HEK293 (cell line): ENCODE measurements at regions of chr22 and their contacts with region 1.

Region 1: DNA sequence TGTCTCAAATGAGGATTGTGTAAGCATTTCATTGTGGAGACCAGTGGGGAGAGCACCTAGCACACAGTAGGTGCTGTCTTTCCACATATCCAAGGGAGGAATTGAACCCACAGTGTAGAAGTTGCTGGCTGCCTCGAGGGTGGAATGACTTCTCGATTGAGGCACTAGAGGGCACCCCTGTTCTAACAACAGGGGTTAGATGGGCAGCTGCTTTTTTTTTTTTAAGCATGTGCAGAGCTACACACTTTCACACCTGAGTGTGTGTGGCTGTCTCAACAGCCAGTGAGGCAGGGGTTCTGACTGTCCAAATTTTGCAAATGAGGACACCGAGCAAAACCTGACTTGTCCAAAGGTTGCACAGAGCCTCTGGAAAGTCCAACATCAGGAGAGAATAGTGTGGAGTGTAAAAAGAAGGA is 118.2 kb upstream of the CRYBB3 start:
- H3K4me3 ChIP-seq: no peak overlapping the region
- H3K27ac ChIP-seq: no peak overlapping the region
- H3K4me1 ChIP-seq: no peaks in the 10 kb centered on the region
- CTCF ChIP-seq: peak; percentile 66

Region 2: DNA sequence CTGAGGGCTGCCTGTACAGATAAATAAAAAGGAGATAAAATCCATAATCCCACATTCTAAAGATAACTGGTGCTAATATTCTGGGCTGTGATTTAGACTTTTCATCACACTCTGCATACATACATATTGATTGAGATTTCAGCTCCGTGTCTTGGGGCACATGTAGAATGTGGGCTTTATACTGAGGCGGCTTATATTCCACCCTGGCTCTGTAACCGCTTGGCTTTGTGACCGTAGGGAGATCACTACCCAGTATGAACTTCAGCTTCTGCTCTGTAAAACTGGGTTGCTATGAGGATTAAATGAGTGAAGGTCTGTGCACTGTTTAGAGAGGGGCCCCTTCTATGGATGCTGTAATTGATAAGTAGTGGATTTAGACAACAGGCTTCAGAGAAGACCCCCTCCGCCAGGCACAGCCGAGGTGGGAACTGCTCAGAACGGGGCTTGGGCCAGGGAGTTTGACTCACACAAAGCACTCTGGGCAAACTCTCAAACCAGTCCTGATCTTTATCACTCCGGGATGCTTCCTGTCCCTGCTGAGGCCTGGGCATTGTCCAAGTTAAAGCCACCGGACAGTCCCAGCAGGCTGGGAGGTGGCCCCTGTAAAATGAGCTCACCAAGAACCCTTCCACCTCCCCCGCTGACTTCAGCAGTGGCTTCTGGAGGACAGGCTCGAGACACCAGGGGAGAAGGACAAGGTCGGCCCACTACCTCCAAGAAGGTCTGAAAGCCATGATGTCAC is 111.7 kb before region 1 on chr22:
- CTCF ChIA-PET with region 1: no interaction called
- POLR2A ChIA-PET with region 1: no interaction called
- H3K4me3 ChIP-seq: no peak overlapping the region
- H3K27ac ChIP-seq: no peak overlapping the region
- H3K4me1 ChIP-seq: no peaks in the 10 kb centered on the region
- CTCF ChIP-seq: no peak

Region 3: GRCh38 chr22:25070956-25071355 is 10.5 kb before region 1 on chr22:
- CTCF ChIA-PET with region 1: interaction called, 10 read pairs
- POLR2A ChIA-PET with region 1: no interaction called
- H3K4me3 ChIP-seq: no peak overlapping the region
- H3K27ac ChIP-seq: no peak overlapping the region
- H3K4me1 ChIP-seq: no peaks in the 10 kb centered on the region
- CTCF ChIP-seq: no peak

Region 4: DNA sequence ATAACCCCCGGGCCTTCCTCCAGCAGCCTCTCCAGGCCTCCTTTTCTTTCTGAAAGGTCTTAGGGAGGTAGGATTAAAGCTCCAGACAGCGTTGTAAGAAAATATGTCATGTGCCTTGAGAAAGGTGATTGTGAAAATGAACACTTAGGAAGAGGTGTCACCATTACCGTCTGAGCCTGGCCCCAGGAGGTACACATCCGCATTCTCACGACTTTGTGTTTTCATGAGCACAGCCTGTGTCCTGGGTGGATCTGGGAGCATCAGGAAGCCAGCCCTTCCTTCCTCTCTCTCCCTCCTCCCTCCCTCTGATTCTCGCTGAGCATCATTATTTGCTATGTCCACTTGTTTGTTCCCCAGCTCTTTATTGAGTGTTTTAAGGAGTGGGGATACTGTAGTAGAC is 13.2 kb after region 1 on chr22:
- CTCF ChIA-PET with region 1: interaction called, 11 read pairs
- POLR2A ChIA-PET with region 1: no interaction called
- H3K4me3 ChIP-seq: no peak overlapping the region
- H3K27ac ChIP-seq: no peak overlapping the region
- H3K4me1 ChIP-seq: no peaks in the 10 kb centered on the region
- CTCF ChIP-seq: no peak

Region 5: GRCh38 chr22:25110846-25111578 is 29.6 kb after region 1 on chr22:
- CTCF ChIA-PET with region 1: interaction called, 12 read pairs
- POLR2A ChIA-PET with region 1: no interaction called
- H3K4me3 ChIP-seq: peak overlapping the region; percentile 74
- H3K27ac ChIP-seq: peak overlapping the region; percentile 57
- H3K4me1 ChIP-seq: peaks cover 4% of the 10 kb centered on the region; the same call in 1 of the 2 replicates
- CTCF ChIP-seq: peak; percentile 94

Region 6: GRCh38 chr22:25167082-25167481 is 85.7 kb after region 1 on chr22:
- CTCF ChIA-PET with region 1: interaction called, 23 read pairs
- POLR2A ChIA-PET with region 1: no interaction called
- H3K4me3 ChIP-seq: no peak overlapping the region
- H3K27ac ChIP-seq: no peak overlapping the region
- H3K4me1 ChIP-seq: 0 out of 2 replicates have a peak, but pooled peaks cover 4% of the 10 kb centered on the region
- CTCF ChIP-seq: no peak

Region 7: DNA sequence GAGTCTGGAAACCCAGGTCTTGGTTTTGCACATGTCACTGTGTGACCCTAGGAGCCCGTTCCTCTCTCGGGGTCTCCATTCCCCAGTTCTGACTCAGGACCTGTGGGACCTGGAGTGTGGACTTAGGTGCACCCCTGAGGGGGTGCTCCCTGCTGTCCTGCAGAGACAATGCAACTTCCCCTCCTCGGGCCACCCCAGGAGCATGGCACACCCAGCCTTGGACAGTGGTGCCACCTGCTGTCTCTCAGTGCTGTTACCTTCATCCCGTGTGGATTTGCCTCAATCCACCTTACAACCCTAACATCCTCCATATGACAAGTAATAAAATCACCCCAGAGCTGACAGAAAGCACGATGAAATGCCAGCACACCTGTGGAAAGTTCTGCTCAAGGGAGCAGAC is 90.7 kb after region 1 on chr22:
- CTCF ChIA-PET with region 1: interaction called, 23 read pairs
- POLR2A ChIA-PET with region 1: no interaction called
- H3K4me3 ChIP-seq: no peak overlapping the region
- H3K27ac ChIP-seq: no peak overlapping the region
- H3K4me1 ChIP-seq: no peaks in the 10 kb centered on the region
- CTCF ChIP-seq: peak; percentile 63